H1 (cell line): ENCODE measurements at regions of chr5 and their contacts with region 1.

Region 1: GRCh38 chr5:141040771-141041426 is 10.3 kb upstream of the PCDHB1 start:
- DNase-seq: peak; percentile 98 to 99
- H3K4me3 ChIP-seq: peak overlapping the region; percentile 71 to 86 (median 74)
- H3K27ac ChIP-seq: peak overlapping the region; percentile 97
- H3K4me1 ChIP-seq: peaks cover 0 to 8% (median 6%) of the 10 kb centered on the region in 4 experiments; a peak in 3 of 7 replicates
- H3K27me3 ChIP-seq: 0 out of 7 replicates have a peak, but pooled peaks cover 0 to 1% (median 0%) of the 10 kb centered on the region in 4 experiments
- CTCF ChIP-seq: peak; percentile 56 to 93 (median 76)
- EP300 ChIP-seq: peak in 1 of 2 experiments; percentile 99; a peak in 2 of 3 replicates
- POLR2A ChIP-seq: peak; percentile 94 to 96
- RAD21 ChIP-seq: peak; percentile 94 to 97

Region 2: DNA sequence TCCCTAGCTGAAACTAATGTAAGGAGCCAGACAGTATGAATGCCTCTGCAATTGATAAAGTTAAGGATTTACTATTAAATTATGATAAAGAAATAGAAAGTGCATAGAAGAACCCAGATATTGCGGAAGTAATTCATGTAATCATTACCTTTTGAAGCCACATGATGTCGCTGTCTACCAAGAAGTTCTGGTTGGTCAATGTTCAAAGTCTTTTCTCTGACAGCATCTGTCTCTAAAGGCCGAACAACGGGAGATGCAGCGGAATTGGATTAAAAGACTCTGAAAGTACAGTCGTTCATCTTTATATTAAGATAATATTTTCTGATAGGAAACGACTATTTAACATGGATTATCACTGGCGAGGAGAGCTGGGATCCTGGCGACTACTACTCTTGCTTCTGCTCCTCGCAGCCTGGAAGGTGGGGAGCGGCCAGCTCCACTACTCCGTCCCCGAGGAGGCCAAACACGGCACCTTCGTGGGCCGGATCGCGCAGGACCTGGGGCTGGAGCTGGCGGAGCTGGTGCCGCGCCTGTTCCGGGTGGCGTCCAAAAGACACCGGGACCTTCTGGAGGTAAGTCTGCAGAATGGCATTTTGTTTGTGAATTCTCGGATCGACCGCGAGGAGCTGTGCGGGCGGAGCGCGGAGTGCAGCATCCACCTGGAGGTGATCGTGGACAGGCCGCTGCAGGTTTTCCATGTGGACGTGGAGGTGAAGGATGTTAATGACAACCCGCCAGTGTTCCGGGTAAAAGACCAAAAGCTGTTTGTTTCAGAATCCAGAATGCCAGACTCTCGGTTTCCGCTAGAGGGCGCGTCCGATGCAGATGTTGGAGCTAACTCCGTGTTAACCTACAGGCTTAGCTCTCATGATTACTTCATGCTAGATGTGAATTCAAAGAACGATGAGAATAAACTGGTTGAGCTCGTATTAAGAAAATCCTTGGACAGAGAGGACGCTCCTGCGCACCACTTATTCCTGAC is 199.6 kb before region 1 on chr5 and contains the start of gene PCDHA8:
- CTCF ChIA-PET with region 1: interaction called, 24 read pairs
- POLR2A ChIA-PET with region 1: interaction called, 4 read pairs
- DNase-seq: peak in 1 of 2 experiments; percentile 84
- H3K4me3 ChIP-seq: peak within 1 kb of the TSS in 3 of 4 experiments; percentile 29 to 47 (median 29); a peak in 4 of 8 replicates
- H3K27ac ChIP-seq: no peak within 1 kb of the TSS
- H3K4me1 ChIP-seq: no peaks in the 10 kb centered on the region
- H3K27me3 ChIP-seq: no peaks in the 10 kb centered on the region
- CTCF ChIP-seq: peak; percentile 63 to 81 (median 79)
- EP300 ChIP-seq: no peak
- POLR2A ChIP-seq: no peak
- RAD21 ChIP-seq: peak; percentile 70 to 76
- total RNA-seq, gene PCDHA8: 0.52 and 0.96 TPM in 2 replicates

Region 3: DNA sequence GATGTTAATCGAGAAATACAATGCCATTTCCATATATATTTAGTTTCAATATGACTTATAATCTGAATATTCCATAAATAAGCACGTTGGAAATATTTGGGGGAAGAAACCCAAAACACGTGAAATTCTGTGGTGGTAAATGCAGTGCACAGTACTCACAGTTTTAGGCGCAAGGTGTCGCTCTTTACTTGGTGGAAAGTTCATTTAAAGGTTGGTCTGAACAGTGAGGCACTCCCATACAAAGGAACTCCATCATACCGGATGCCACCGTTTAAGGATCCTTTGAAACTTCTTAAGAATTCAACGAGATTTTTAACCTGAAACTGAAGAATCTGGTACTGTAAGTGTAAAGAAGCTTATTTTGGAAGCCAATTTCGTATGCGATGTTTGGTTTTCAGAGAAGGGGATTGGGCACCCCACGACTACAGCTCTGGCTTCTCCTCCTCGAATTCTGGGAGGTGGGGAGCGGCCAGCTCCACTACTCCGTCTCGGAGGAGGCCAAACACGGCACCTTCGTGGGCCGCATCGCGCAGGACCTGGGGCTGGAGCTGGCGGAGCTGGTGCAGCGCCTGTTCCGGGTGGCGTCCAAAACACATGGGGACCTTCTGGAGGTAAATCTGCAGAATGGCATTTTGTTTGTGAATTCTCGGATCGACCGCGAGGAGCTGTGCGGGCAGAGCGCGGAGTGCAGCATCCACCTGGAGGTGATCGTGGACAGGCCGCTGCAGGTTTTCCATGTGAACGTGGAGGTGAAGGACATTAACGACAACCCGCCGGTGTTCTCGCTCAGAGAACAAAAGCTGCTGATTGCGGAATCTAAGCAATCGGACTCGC is 172.0 kb before region 1 on chr5 and contains the start of gene PCDHA11:
- CTCF ChIA-PET with region 1: interaction called, 141 read pairs
- POLR2A ChIA-PET with region 1: interaction called, 32 read pairs
- DNase-seq: no peak
- H3K4me3 ChIP-seq: peak within 1 kb of the TSS; percentile 54 to 66 (median 58)
- H3K27ac ChIP-seq: peak within 1 kb of the TSS; percentile 37; the same call in 1 of the 2 replicates
- H3K4me1 ChIP-seq: no peaks in the 10 kb centered on the region
- H3K27me3 ChIP-seq: no peaks in the 10 kb centered on the region
- CTCF ChIP-seq: peak; percentile 32 to 68 (median 56)
- EP300 ChIP-seq: no peak
- POLR2A ChIP-seq: peak in 1 of 2 experiments; percentile 46; a peak in 2 of 3 replicates
- RAD21 ChIP-seq: peak; percentile 64 to 72
- total RNA-seq, gene PCDHA11: 6.6 and 6.9 TPM in 2 replicates

Region 4: DNA sequence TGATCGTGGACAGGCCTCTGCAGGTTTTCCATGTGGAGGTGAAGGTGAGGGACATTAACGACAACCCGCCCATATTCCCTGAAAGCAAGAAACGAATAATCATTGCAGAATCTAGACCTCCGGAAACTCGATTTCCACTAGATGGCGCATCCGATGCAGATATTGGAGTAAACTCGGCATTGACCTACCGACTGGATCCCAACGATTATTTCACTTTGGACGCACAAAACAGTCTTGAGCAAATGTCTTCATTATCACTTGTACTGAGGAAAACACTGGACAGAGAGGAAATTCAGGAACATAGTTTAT is 158.4 kb before region 1 on chr5:
- CTCF ChIA-PET with region 1: interaction called, 95 read pairs
- POLR2A ChIA-PET with region 1: interaction called, 17 read pairs
- DNase-seq: peak in 1 of 2 experiments; percentile 73
- H3K4me3 ChIP-seq: peak overlapping the region; percentile 11 to 60 (median 58); a peak in 6 of 8 replicates
- H3K27ac ChIP-seq: no peak overlapping the region
- H3K4me1 ChIP-seq: no peaks in the 10 kb centered on the region
- H3K27me3 ChIP-seq: no peaks in the 10 kb centered on the region
- CTCF ChIP-seq: peak in 2 of 3 experiments; percentile 70 to 80; a peak in 3 of 4 replicates
- EP300 ChIP-seq: no peak
- POLR2A ChIP-seq: no peak
- RAD21 ChIP-seq: peak; percentile 84 to 89

Region 5: DNA sequence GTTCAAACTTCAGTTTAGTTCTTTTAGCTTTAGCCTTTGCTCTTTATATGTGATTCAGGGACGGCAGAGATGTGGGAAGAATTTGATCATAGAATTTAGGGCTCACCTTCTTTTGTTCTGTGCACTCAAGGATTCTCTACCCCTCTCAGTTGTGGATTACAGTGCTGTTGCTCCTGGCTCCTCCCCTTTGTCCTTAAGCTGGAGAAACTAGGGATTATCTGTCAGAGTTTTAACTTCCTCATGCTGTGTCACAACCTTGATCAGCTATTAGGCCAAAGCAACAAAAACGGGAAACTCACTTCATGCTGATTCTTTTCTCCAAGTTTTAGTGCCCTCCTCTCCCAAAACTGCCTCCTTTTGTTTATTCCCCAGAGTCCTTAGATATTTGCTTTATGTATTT is 87.7 kb before region 1 on chr5:
- CTCF ChIA-PET with region 1: interaction called, 10 read pairs
- POLR2A ChIA-PET with region 1: no interaction called
- DNase-seq: no peak
- H3K4me3 ChIP-seq: no peak overlapping the region
- H3K27ac ChIP-seq: no peak overlapping the region
- H3K4me1 ChIP-seq: no peaks in the 10 kb centered on the region
- H3K27me3 ChIP-seq: no peaks in the 10 kb centered on the region
- CTCF ChIP-seq: no peak
- EP300 ChIP-seq: no peak
- POLR2A ChIP-seq: no peak
- RAD21 ChIP-seq: no peak

Region 6: DNA sequence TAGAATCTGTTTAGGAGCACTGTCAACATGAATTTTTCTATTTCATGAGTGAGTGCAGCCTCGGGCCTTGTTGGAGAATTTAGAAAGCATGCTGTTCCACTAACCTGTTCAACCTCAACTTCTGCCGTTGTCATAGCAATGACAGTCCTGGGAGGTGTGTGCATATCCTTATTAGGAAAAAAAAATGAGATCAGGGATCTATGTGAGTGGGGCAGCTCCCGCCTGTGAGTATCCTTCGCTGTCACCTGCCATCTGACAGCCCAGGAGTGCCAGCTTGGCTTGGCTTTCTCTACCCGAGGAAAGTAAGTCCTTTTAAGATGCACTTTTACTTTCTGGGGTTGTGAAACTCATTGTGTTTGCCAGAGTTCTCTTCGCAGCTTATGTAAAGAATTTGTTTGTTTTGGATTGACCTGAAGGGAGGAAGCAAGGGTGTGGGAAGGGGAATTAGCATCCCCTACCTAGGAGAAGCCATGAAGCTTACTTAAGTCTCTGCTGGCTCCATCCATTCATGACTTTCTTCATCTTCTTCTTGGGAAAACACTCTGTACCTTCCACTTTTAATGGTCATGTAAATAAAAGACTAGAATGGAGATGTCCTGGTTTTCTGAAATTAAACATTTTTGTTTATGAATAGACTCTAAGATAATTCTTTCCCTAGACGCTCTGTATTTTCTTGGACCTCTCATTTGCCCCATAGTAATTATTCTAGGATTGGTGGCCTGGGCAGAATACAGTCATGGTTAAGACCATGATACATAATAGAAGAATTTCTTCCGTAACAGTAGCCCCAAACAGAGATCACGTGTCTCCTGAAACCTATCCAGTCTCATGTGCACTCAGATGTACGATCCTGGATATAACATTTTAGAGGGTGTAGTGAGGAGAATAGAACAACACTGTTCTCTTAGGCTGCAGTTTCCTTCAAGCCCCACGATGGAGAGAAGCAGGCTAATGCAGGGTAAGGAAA is 52.6 kb before region 1 on chr5:
- CTCF ChIA-PET with region 1: interaction called, 30 read pairs
- POLR2A ChIA-PET with region 1: interaction called, 17 read pairs
- DNase-seq: no peak
- H3K4me3 ChIP-seq: peak overlapping the region in 1 of 4 experiments; percentile 2; a peak in 2 of 8 replicates
- H3K27ac ChIP-seq: no peak overlapping the region
- H3K4me1 ChIP-seq: peaks cover 6 to 28% (median 13%) of the 10 kb centered on the region in 4 experiments; a peak in 6 of 7 replicates
- H3K27me3 ChIP-seq: no peaks in the 10 kb centered on the region
- CTCF ChIP-seq: no peak
- EP300 ChIP-seq: no peak
- POLR2A ChIP-seq: no peak
- RAD21 ChIP-seq: no peak